ENCODE measurements at regions of chr7 and their contacts with region 1.

Region 1: DNA sequence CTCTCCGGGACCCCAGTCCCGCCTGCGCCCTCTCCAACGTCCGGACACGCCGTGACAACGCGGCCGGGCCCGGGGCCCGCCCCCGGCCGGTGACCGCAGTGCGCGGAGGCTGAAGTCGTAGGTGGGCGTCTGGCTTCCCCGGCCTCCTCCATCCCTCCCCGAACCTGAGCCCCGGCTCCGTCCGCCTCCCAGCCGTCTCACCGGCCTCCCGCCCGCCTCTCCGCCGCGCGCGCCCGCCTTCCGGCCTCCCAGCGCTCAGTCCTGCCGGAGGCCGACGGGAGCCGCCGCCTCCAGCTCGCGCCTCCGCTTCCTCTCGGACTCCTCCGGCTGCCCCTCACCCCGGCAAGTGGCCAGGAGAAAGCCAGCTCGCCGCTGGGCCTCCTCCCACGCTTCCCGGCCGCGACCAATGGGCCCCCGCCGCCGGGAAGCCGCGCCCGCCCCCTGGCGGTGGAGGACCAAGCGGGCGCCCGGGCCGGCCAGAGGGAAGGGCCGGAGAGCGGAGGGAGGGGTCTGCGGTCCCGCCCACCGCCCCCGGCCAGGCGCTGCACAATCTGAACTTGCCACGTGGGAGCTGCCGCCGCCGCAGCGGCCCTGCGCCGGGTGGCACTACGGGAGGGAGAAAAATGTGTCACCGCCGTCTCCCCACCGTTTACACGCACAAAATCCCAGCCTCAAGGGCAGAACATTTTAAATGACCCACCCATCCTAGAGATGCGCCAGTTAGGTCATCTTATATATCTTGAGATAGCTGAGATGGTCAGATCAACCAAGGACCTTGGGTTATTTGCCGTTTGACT is at the start of gene FAM3C:
- DNase-seq: peak; percentile 68
- H3K4me3 Mint-ChIP-seq: peak within 1 kb of the TSS; percentile 81
- H3K27ac Mint-ChIP-seq: peak within 1 kb of the TSS; percentile 86
- H3K4me1 Mint-ChIP-seq: peaks cover 25% of the 10 kb centered on the region
- H3K27me3 Mint-ChIP-seq: no peaks in the 10 kb centered on the region
- total RNA-seq, gene FAM3C: 12.2 to 15.6 TPM

Region 2: GRCh38 chr7:121366852-121367431 is 29.2 kb before region 1 on chr7:
- CTCF ChIA-PET with region 1: interaction called, 30 read pairs
- POLR2A ChIA-PET with region 1: no interaction called
- DNase-seq: peak; percentile 50
- H3K4me3 Mint-ChIP-seq: no peak overlapping the region
- H3K27ac Mint-ChIP-seq: no peak overlapping the region
- H3K4me1 Mint-ChIP-seq: peaks cover 31% of the 10 kb centered on the region
- H3K27me3 Mint-ChIP-seq: no peaks in the 10 kb centered on the region

Region 3: DNA sequence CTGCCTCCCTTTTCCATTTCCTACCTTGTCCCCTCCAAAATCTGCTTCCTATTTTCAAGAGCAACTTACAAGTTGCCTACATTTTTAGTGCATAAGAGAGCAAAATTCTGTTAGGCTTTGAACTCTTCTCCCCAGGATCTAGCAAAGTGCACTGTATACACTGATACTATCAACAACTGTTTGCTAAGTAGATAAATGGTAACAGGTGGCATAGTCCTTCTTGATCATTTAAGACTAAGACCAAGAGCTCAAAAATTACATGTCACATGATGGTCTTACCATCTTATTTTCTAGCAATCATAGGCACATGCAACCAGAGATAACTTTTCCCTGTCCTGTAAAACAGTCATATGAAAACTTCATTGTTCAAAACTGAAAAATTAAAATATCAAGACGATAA is 16.2 kb before region 1 on chr7:
- CTCF ChIA-PET with region 1: interaction called, 30 read pairs
- POLR2A ChIA-PET with region 1: no interaction called
- DNase-seq: no peak
- H3K4me3 Mint-ChIP-seq: no peak overlapping the region
- H3K27ac Mint-ChIP-seq: no peak overlapping the region
- H3K4me1 Mint-ChIP-seq: peaks cover 17% of the 10 kb centered on the region
- H3K27me3 Mint-ChIP-seq: no peaks in the 10 kb centered on the region

Region 4: DNA sequence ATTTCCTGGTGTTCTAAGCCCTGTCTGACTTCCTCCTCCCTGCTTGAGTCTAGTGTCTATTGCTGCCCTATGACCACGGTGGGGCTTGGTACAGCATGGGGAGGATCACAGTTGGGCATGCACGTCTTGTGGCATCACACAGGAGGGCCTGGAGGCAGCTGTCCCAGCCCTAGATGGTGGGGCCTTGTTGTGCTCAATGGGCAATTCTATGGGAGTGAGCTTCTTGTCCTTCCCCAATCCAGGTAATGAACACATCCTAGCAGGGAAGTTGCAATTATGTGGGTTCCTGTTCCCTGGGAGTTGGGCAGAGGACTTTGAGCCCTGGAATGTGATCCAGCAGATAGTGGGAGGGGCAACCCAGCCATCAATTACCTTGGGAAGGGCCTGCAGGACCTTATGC is 10.8 kb after region 1 on chr7:
- CTCF ChIA-PET with region 1: interaction called, 12 read pairs
- POLR2A ChIA-PET with region 1: no interaction called
- DNase-seq: no peak
- H3K4me3 Mint-ChIP-seq: no peak overlapping the region
- H3K27ac Mint-ChIP-seq: no peak overlapping the region
- H3K4me1 Mint-ChIP-seq: peaks cover 4% of the 10 kb centered on the region
- H3K27me3 Mint-ChIP-seq: peaks cover 16% of the 10 kb centered on the region

Region 5: GRCh38 chr7:121530227-121531174 is 134.3 kb after region 1 on chr7:
- CTCF ChIA-PET with region 1: interaction called, 13 read pairs
- POLR2A ChIA-PET with region 1: no interaction called
- DNase-seq: peak; percentile 52
- H3K4me3 Mint-ChIP-seq: no peak overlapping the region
- H3K27ac Mint-ChIP-seq: peak overlapping the region; percentile 79
- H3K4me1 Mint-ChIP-seq: peaks cover 29% of the 10 kb centered on the region
- H3K27me3 Mint-ChIP-seq: peaks cover 4% of the 10 kb centered on the region

Measured in activated CD4-positive, alpha-beta T cell treated with anti-CD3 and anti-CD28 coated beads, Interleukin-2, amount 10 ng/mL, durations not matched to agents 7 days and 5 days (primary cell).